ENCODE measurements at regions of chr11 and their contacts with region 1.

Region 1: GRCh38 chr11:64846998-64847666 is 2.7 kb upstream of the CDC42BPG start:
- DNase-seq: peak; percentile 91 to 96 (median 93)
- H3K4me3 ChIP-seq: no peak overlapping the region
- H3K27ac ChIP-seq: no peak overlapping the region
- H3K4me1 ChIP-seq: peaks cover 7% of the 10 kb centered on the region
- H3K27me3 ChIP-seq: no peaks in the 10 kb centered on the region
- CTCF ChIP-seq: peak; percentile 94 to 98 (median 96)
- EP300 ChIP-seq: no peak
- POLR2A ChIP-seq: no peak

Region 2: GRCh38 chr11:64887757-64888405 is 40.7 kb after region 1 on chr11:
- intact Hi-C with region 1: loop called in 3 of 4 experiments (anchors 2 to 5 kb)
- DNase-seq: peak; percentile 69 to 88 (median 82)
- H3K4me3 ChIP-seq: no peak overlapping the region
- H3K27ac ChIP-seq: no peak overlapping the region
- H3K4me1 ChIP-seq: peaks cover 1% of the 10 kb centered on the region
- H3K27me3 ChIP-seq: no peaks in the 10 kb centered on the region
- CTCF ChIP-seq: peak; percentile 90 to 96 (median 95)
- EP300 ChIP-seq: no peak
- POLR2A ChIP-seq: no peak

Region 3: GRCh38 chr11:64894070-64894796 is 47.1 kb after region 1 on chr11:
- intact Hi-C with region 1: loop called (anchors 2 to 5 kb)
- DNase-seq: peak; percentile 74 to 88 (median 81)
- H3K4me3 ChIP-seq: no peak overlapping the region
- H3K27ac ChIP-seq: no peak overlapping the region
- H3K4me1 ChIP-seq: no peaks in the 10 kb centered on the region
- H3K27me3 ChIP-seq: no peaks in the 10 kb centered on the region
- CTCF ChIP-seq: peak; percentile 60 to 82 (median 71)
- EP300 ChIP-seq: no peak
- POLR2A ChIP-seq: no peak

Region 4: GRCh38 chr11:65003282-65003681 is 156.2 kb after region 1 on chr11:
- intact Hi-C with region 1: loop called in 1 of 4 experiments (anchors 10 kb)
- DNase-seq: no peak
- H3K4me3 ChIP-seq: no peak overlapping the region
- H3K27ac ChIP-seq: no peak overlapping the region
- H3K4me1 ChIP-seq: no peaks in the 10 kb centered on the region
- H3K27me3 ChIP-seq: no peaks in the 10 kb centered on the region
- CTCF ChIP-seq: no peak
- EP300 ChIP-seq: no peak
- POLR2A ChIP-seq: no peak

Region 5: DNA sequence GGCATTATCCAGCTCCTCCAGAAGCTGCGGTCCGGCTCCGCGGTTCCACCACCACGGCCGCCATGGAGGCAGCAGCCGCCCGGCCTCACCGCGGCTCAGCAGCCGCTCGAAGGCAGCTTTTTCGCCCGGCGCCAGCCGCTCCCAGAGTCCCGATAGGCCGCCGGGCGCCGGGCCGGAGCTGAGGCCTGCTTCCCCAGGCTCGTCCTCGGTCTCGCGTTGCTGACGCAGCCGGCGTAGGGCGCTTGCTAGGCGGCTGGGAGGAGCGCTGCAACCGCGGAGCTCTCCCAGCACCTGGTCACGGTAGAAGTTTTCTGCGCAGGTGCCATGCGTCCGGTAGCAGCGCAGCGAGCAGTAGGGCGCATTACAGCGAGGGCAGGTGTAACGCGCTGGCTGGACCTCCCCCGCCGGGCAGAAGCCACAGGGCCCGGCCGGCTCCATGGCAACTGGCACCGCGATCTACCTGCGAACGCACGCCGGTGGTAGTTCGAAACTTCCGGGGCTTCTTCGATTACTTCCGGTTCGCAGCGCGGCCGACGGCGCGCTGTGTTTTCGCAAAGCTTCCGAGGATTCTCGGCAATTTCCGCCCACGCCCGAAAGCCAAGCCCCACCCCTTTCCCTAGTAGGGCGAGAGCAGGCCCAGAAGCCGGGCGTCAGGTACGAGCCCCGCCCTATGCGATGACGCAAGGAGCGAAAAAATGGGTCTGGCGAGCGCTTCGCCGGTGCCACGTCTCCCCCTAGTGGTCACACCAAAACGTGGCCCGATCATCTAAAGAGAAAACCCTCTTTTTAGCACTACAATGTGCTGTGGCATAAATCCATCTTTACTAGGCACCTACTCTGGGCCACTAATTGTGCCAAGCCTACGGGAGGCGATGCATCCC is 270.3 kb after region 1 on chr11 and contains the start of gene ZNHIT2:
- intact Hi-C with region 1: loop called in 3 of 4 experiments (anchors 5 to 10 kb)
- DNase-seq: peak; percentile 99 to 100 (median 100)
- H3K4me3 ChIP-seq: peak within 1 kb of the TSS; percentile 70
- H3K27ac ChIP-seq: peak within 1 kb of the TSS; percentile 27 to 70
- H3K4me1 ChIP-seq: peaks cover 9% of the 10 kb centered on the region
- H3K27me3 ChIP-seq: no peaks in the 10 kb centered on the region
- CTCF ChIP-seq: peak; percentile 95 to 99 (median 98)
- EP300 ChIP-seq: peak; percentile 13
- POLR2A ChIP-seq: peak; percentile 64
- total RNA-seq, gene ZNHIT2: 10.0 to 33.7 (median 13.4) TPM